Posterior cingulate gyrus (tissue), 11 donors: ENCODE measurements at regions of chr11 and their contacts with region 1.

Region 1: GRCh38 chr11:62340269-62340901 is 3.1 kb downstream of the ASRGL1 start:
- DNase-seq: peak; percentile 56 to 95 (median 78)

Region 2: DNA sequence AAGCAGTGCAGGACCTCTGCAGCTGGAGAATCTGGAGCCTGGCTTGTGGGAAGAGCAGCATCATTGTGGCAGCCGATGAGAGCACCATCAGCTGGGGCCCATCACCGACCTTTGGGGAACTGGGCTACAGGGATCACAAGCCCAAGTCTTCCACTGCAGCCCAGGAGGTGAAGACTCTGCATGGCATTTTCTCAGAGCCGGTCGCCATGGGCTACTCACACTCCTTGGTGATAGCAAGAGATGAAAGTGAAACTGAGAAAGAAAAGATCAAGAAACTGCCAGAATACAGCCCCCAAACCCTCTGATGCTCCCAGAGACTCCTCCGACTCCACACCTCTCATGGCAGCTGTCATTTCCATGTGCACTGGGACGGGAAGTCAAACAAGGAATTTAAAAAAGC is 32.5 kb after region 1 on chr11:
- intact Hi-C with region 1: loop called (anchors 1 kb)
- DNase-seq: peak in 1 of 10 donors; percentile 38